Activated CD4-positive, alpha-beta T cell treated with anti-CD3 and anti-CD28 coated beads, Interleukin-2, amount 10 ng/mL, durations not matched to agents 24 days and 14 days (primary cell): ENCODE measurements at regions of chr1 and their contacts with region 1.

Region 1: GRCh38 chr1:44674113-44675000 is at the starts of genes ARMH1 and TMEM53:
- DNase-seq: peak; percentile 99
- H3K4me3 Mint-ChIP-seq: peak within 1 kb of the TSS; percentile 85
- H3K27ac Mint-ChIP-seq: peak within 1 kb of the TSS; percentile 81
- H3K4me1 Mint-ChIP-seq: peaks cover 28% of the 10 kb centered on the region
- H3K27me3 Mint-ChIP-seq: no peaks in the 10 kb centered on the region
- total RNA-seq, gene ARMH1: 133 and 137 TPM in 2 replicates
- total RNA-seq, gene TMEM53: 4.5 and 5.1 TPM in 2 replicates

Region 2: GRCh38 chr1:44354840-44355581 is 319.3 kb before region 1 on chr1 and contains the start of gene ERI3:
- intact Hi-C with region 1: loop called (anchors 1 kb)
- DNase-seq: peak; percentile 99
- H3K4me3 Mint-ChIP-seq: peak within 1 kb of the TSS; percentile 91
- H3K27ac Mint-ChIP-seq: peak within 1 kb of the TSS; percentile 91
- H3K4me1 Mint-ChIP-seq: peaks cover 28% of the 10 kb centered on the region
- H3K27me3 Mint-ChIP-seq: no peaks in the 10 kb centered on the region
- total RNA-seq, gene ERI3: 50.2 and 53.2 TPM in 2 replicates

Region 3: GRCh38 chr1:44571712-44572571 is 102.4 kb before region 1 on chr1:
- intact Hi-C with region 1: no loop called
- DNase-seq: peak; percentile 71
- H3K4me3 Mint-ChIP-seq: no peak overlapping the region
- H3K27ac Mint-ChIP-seq: no peak overlapping the region
- H3K4me1 Mint-ChIP-seq: no peaks in the 10 kb centered on the region
- H3K27me3 Mint-ChIP-seq: peaks cover 19% of the 10 kb centered on the region

Region 4: DNA sequence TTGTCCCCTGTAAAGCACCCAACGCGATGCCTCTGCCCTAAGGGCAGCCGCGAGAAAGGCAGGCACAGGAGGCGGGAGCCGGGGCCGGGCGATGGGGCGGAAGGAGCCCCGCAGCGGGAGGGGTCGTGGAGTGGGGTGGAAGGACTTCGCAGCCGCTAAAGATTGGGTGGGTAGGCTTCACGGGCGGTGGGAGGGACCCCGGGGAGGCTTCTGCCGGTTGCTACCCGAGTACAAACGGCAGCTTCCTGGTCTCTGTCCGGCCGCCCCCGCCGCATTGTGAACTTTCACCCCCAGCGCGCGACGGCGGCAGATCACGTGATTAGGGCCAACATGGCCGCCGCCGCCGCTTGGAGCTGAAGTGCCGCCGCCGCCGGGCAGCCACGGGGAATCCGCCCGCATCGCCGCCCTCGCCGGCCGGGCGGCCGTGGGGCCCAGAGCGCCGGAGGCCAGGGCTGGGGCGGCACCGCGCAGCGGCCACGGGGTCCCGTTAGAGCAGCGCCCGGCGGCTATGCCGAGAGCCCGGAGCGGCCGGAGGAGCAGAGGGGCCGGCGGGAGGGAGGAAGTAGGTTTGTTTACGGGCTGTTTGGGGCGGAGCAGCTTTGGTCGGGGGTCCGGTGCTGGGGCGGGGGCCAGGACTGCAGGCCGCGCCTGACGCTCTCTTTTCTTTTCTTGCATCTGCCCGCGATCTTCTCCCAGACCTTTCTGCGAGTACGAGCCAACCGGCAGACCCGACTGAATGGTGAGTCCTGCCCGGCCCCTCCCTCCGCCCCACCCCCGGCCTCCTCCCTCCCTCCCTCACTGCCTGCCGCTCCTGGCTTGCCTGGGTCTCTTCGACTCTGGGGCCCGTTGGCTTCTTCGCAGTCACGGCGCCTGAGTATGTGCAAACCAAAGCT is 42.5 kb before region 1 on chr1:
- intact Hi-C with region 1: loop called (anchors 1 kb)
- DNase-seq: peak; percentile 97
- H3K4me3 Mint-ChIP-seq: peak overlapping the region; percentile 89
- H3K27ac Mint-ChIP-seq: peak overlapping the region; percentile 98
- H3K4me1 Mint-ChIP-seq: peaks cover 32% of the 10 kb centered on the region
- H3K27me3 Mint-ChIP-seq: no peaks in the 10 kb centered on the region

Region 5: GRCh38 chr1:44739361-44740178 is 65.2 kb after region 1 on chr1 and contains the start of gene KIF2C:
- intact Hi-C with region 1: loop called (anchors 1 kb)
- DNase-seq: peak; percentile 99
- H3K4me3 Mint-ChIP-seq: peak within 1 kb of the TSS; percentile 96
- H3K27ac Mint-ChIP-seq: peak within 1 kb of the TSS; percentile 97
- H3K4me1 Mint-ChIP-seq: peaks cover 38% of the 10 kb centered on the region
- H3K27me3 Mint-ChIP-seq: no peaks in the 10 kb centered on the region
- total RNA-seq, gene KIF2C: 78.1 and 82.7 TPM in 2 replicates